ENCODE measurements at regions of chr16 and their contacts with region 1.

Region 1: DNA sequence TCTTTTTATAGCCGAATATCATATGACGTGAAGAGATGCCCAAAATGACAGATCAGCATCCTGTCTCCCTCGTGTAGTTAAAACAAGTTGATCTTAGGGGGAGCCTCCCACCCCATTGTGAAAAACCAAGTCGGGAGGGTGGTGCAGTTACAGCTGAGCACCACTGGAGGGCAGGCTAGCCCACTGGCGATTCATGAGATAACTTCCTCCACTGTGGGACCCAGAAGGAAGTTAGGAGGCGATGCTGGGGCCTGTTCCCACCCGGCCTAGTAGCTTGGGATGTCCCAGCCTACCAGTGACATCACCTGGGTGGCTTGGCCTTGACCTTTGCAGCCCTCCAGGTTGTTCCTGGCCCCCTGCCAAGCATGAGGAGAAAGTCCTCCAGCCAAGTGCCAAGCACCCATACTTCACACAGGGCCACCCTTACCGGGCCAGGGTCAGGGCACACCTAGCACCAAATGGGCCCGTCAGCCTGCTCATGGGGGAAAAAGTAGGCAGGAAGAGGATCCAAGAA is 8.1 kb upstream of the CPNE2 start:
- DNase-seq: peak; percentile 88
- ATAC-seq: peak; percentile 95
- H3K4me3 Mint-ChIP-seq: no peak overlapping the region
- H3K27ac Mint-ChIP-seq: peak overlapping the region; percentile 56
- H3K4me1 Mint-ChIP-seq: peaks cover 10% of the 10 kb centered on the region
- H3K27me3 Mint-ChIP-seq: no peaks in the 10 kb centered on the region
- CTCF ChIP-seq: peak; percentile 97

Region 2: DNA sequence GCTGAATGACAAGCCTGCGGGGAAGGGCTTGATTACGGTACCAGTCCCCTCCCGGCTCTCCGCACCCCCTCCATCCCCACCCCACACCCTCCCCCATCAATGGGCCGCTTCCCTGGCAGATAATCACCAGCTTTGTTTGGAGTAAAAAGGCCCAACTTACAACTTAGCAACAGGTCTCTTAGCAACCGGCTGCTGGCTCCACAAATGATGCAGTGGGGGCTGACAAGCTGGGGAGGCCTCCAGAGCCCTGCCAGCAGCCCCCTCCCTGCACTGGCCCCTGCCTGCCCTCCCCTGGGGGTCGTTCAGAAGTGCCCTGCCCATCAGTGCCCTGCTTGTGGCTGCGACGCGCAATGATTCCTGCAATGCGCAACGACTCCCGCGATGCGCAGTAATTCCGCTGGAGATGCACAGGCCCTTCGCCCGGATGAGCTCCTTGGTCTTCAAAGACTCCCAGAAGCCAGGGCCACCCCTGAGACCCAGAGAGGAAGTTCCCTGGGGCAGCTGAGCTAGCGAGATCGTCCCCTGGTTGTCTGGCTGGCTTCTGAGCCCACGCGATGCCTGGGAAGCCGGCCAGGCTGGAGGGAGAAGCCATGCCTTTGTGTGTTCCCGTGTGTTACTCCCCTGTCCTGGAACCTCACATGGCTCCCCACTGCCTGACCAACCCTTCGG is 31.3 kb after region 1 on chr16:
- CTCF ChIA-PET with region 1: interaction called, 13 read pairs
- POLR2A ChIA-PET with region 1: interaction called, 3 read pairs
- intact Hi-C with region 1: no loop called
- DNase-seq: no peak
- ATAC-seq: no peak
- H3K4me3 Mint-ChIP-seq: no peak overlapping the region
- H3K27ac Mint-ChIP-seq: no peak overlapping the region
- H3K4me1 Mint-ChIP-seq: peaks cover 8% of the 10 kb centered on the region
- H3K27me3 Mint-ChIP-seq: no peaks in the 10 kb centered on the region
- CTCF ChIP-seq: no peak

Region 3: GRCh38 chr16:57134982-57135381 is 50.7 kb after region 1 on chr16:
- CTCF ChIA-PET with region 1: interaction called, 10 read pairs
- POLR2A ChIA-PET with region 1: interaction called, 3 read pairs
- intact Hi-C with region 1: no loop called
- DNase-seq: peak; percentile 33
- ATAC-seq: peak; percentile 27
- H3K4me3 Mint-ChIP-seq: peak overlapping the region; percentile 54
- H3K27ac Mint-ChIP-seq: peak overlapping the region; percentile 91
- H3K4me1 Mint-ChIP-seq: peaks cover 59% of the 10 kb centered on the region
- H3K27me3 Mint-ChIP-seq: no peaks in the 10 kb centered on the region
- CTCF ChIP-seq: no peak

Region 4: GRCh38 chr16:57152096-57153093 is 68.1 kb after region 1 on chr16:
- CTCF ChIA-PET with region 1: interaction called, 16 read pairs
- POLR2A ChIA-PET with region 1: interaction called, 6 read pairs
- intact Hi-C with region 1: no loop called
- DNase-seq: peak; percentile 25
- ATAC-seq: peak; percentile 78
- H3K4me3 Mint-ChIP-seq: no peak overlapping the region
- H3K27ac Mint-ChIP-seq: peak overlapping the region; percentile 19
- H3K4me1 Mint-ChIP-seq: peaks cover 21% of the 10 kb centered on the region
- H3K27me3 Mint-ChIP-seq: no peaks in the 10 kb centered on the region
- CTCF ChIP-seq: no peak

Region 5: DNA sequence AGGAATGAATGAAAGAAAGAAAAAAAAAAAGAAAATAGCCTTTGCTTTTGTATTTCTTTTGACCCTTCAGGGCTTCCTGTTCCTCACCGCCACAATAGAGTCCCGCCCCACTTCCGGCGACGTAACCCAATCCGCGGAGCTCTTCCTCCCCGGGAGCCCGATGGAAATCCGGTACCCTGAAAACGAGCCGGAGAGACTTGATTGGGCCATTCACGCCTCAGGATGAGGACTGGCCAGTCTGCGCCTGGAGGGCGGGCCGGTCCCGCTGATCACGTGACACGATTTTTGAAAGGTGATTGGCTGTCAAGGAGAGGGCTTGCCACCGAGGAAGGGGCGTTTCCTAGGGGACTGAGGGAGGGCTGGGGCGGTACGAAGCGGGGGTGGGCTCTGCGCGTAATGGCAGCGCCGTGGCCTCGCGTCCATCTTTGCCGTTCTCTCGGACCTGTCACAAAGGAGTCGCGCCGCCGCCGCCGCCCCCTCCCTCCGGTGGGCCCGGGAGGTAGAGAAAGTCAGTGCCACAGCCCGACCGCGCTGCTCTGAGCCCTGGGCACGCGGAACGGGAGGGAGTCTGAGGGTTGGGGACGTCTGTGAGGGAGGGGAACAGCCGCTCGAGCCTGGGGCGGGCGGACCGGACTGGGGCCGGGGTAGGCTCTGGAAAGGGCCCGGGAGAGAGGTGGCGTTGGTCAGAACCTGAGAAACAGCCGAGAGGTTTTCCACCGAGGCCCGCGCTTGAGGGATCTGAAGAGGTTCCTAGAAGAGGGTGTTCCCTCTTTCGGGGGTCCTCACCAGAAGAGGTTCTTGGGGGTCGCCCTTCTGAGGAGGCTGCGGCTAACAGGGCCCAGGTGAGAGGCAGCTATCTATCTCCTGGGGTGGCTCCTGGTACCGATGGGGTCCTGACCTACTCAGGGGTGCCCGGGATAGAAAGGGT is 101.9 kb after region 1 on chr16 and contains the starts of genes PSME3IP1 and RSPRY1:
- CTCF ChIA-PET with region 1: interaction called, 10 read pairs
- POLR2A ChIA-PET with region 1: no interaction called
- intact Hi-C with region 1: no loop called
- DNase-seq: peak; percentile 99
- ATAC-seq: peak; percentile 93
- H3K4me3 Mint-ChIP-seq: peak within 1 kb of the TSS; percentile 95
- H3K27ac Mint-ChIP-seq: peak within 1 kb of the TSS; percentile 96
- H3K4me1 Mint-ChIP-seq: peaks cover 48% of the 10 kb centered on the region
- H3K27me3 Mint-ChIP-seq: no peaks in the 10 kb centered on the region
- CTCF ChIP-seq: no peak
- total RNA-seq, gene PSME3IP1: 101 to 103 TPM
- total RNA-seq, gene RSPRY1: 24.5 to 29.4 TPM